Activated CD8-positive, alpha-beta memory T cell treated with anti-CD3 and anti-CD28 coated beads, Interleukin-2, amount 10 ng/mL, durations not matched to agents 7 days and 5 days (primary cell): ENCODE measurements at regions of chr11 and their contacts with region 1.

Region 1: GRCh38 chr11:61967116-61967923 is at the start of gene FTH1:
- DNase-seq: peak; percentile 91
- ATAC-seq: peak; percentile 79
- H3K4me3 Mint-ChIP-seq: peak within 1 kb of the TSS; percentile 88
- H3K27ac Mint-ChIP-seq: peak within 1 kb of the TSS; percentile 94
- H3K4me1 Mint-ChIP-seq: peaks cover 59% of the 10 kb centered on the region
- H3K27me3 Mint-ChIP-seq: no peaks in the 10 kb centered on the region
- total RNA-seq, gene FTH1: 740 to 867 TPM

Region 2: DNA sequence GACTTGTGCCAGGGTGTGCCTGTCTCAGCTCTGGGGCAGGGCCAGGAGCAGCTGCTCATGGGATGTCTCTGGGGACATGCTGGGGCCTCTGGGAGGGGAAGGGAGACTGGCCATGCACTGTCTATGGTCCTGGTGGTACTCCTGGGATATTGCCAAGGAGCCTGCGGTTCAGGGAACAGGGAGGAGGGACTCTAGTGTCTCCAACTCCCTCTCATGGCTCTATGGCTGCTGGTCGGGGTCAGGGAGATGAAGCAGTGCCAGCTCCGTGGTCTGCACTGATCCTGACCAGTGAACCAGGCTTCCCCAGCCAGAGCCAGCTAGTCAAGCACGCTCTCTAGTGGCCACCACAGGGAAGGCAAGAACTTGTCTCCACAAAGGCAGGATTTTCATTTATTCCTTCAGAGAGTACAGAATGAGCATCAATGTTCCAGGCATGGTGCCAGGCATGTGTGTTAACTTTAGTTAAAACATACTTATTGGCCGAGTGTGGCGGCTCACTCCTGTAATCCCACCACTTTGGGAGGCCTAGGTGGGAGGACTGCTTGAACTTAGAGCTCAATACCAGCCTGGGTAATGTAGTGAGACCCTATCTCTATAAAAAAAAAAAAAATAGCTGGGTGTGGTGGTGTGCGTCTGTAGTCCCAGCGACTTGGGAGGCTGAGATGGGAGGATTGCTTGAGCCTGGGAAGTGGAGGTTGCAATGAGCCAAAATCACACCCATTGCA is 19.7 kb before region 1 on chr11:
- CTCF ChIA-PET with region 1: interaction called, 28 read pairs
- DNase-seq: peak; percentile 77
- ATAC-seq: peak; percentile 84
- H3K4me3 Mint-ChIP-seq: no peak overlapping the region
- H3K27ac Mint-ChIP-seq: no peak overlapping the region
- H3K4me1 Mint-ChIP-seq: no peaks in the 10 kb centered on the region
- H3K27me3 Mint-ChIP-seq: peaks cover 4% of the 10 kb centered on the region

Region 3: GRCh38 chr11:62266558-62266957 is 299.2 kb after region 1 on chr11:
- CTCF ChIA-PET with region 1: no interaction called
- DNase-seq: no peak
- ATAC-seq: peak; percentile 39
- H3K4me3 Mint-ChIP-seq: no peak overlapping the region
- H3K27ac Mint-ChIP-seq: no peak overlapping the region
- H3K4me1 Mint-ChIP-seq: peaks cover 3% of the 10 kb centered on the region
- H3K27me3 Mint-ChIP-seq: peaks cover 14% of the 10 kb centered on the region